ENCODE measurements at regions of chr9 and their contacts with region 1.

Region 1: GRCh38 chr9:89984214-89984613 is 379.4 kb downstream of the GADD45G start:
- DNase-seq: no peak
- H3K4me3 Mint-ChIP-seq: peak overlapping the region; percentile 53
- H3K27ac Mint-ChIP-seq: peak overlapping the region; percentile 95
- H3K4me1 Mint-ChIP-seq: peaks cover 60% of the 10 kb centered on the region
- H3K27me3 Mint-ChIP-seq: peaks cover 20% of the 10 kb centered on the region

Region 2: GRCh38 chr9:89428901-89429890 is 555.0 kb before region 1 on chr9:
- intact Hi-C with region 1: loop called (anchors 10 kb)
- DNase-seq: no peak
- H3K4me3 Mint-ChIP-seq: peak overlapping the region; percentile 17
- H3K27ac Mint-ChIP-seq: peak overlapping the region; percentile 90
- H3K4me1 Mint-ChIP-seq: peaks cover 79% of the 10 kb centered on the region
- H3K27me3 Mint-ChIP-seq: no peaks in the 10 kb centered on the region

Region 3: GRCh38 chr9:89738137-89738932 is 245.9 kb before region 1 on chr9:
- intact Hi-C with region 1: loop called (anchors 2 kb)
- DNase-seq: no peak
- H3K4me3 Mint-ChIP-seq: no peak overlapping the region
- H3K27ac Mint-ChIP-seq: peak overlapping the region; percentile 90
- H3K4me1 Mint-ChIP-seq: peaks cover 64% of the 10 kb centered on the region
- H3K27me3 Mint-ChIP-seq: no peaks in the 10 kb centered on the region

Region 4: DNA sequence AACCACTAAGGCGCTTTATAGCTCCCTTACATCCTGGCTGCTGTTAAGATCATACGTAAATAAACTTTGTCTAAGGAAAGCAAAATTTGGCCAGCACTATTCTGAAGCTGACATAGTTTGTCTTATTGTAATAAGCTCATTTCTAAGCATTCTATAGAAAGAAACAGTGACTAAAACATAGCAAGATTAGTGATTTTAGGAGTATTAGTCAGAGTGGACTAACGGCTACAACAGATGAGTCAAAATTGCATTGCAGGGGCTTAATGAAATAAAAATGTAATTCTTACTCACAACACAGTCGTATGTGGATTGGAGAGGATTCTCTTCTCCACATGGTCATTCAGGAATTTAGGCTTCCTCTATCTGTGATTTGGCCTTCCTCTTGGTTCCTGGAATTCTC is 31.8 kb before region 1 on chr9:
- intact Hi-C with region 1: loop called (anchors 2 kb)
- DNase-seq: no peak
- H3K4me3 Mint-ChIP-seq: no peak overlapping the region
- H3K27ac Mint-ChIP-seq: peak overlapping the region; percentile 47
- H3K4me1 Mint-ChIP-seq: peaks cover 27% of the 10 kb centered on the region
- H3K27me3 Mint-ChIP-seq: no peaks in the 10 kb centered on the region

Region 5: DNA sequence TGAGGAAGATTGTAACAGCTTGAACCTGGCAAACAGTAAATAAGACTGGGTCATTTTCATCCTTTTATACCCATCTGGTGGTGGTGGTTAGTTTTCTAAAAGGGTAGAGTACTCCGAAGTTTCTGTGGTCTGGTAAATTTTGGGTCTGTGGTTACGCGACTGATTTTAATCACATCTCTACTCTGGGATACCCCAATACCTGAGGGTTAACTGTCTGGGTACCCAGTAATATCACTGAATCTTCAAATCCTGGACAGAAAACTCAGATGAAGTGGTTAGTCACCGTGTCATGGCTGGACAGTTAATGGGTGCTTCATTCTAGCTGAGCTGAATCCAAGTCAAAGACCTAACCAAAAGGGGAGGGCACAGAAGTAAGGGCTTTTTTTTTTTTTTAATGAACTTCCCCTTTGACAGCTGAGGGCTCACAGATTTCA is 94.8 kb after region 1 on chr9:
- intact Hi-C with region 1: loop called (anchors 10 kb)
- DNase-seq: no peak
- H3K4me3 Mint-ChIP-seq: no peak overlapping the region
- H3K27ac Mint-ChIP-seq: no peak overlapping the region
- H3K4me1 Mint-ChIP-seq: peaks cover 21% of the 10 kb centered on the region
- H3K27me3 Mint-ChIP-seq: peaks cover 40% of the 10 kb centered on the region

Measured in activated T-helper 2 cell treated with anti-CD3 and anti-CD28 coated beads, Interferon-gamma antibody, Interleukin-2, Interleukin-4, amounts not matched to agents 10 μg/mL and 5 μg/mL and 100 μg/mL, durations not matched to agents 14 hours and 24 hours and 36 hours (primary cell).